Heart left ventricle (tissue), 16 donors: ENCODE measurements at regions of chr2 and their contacts with region 1.

Region 1: GRCh38 chr2:181586569-181587081 is 70.3 kb downstream of the CERKL start:
- DNase-seq: no peak
- ATAC-seq: no peak
- H3K4me3 ChIP-seq: no peak overlapping the region
- H3K27ac ChIP-seq: no peak overlapping the region
- H3K4me1 ChIP-seq: no peaks in the 10 kb centered on the region
- H3K27me3 ChIP-seq: peaks cover 0 to 40% (median 0%) of the 10 kb centered on the region in 9 donors
- CTCF ChIP-seq: no peak
- POLR2A ChIP-seq: no peak

Region 2: DNA sequence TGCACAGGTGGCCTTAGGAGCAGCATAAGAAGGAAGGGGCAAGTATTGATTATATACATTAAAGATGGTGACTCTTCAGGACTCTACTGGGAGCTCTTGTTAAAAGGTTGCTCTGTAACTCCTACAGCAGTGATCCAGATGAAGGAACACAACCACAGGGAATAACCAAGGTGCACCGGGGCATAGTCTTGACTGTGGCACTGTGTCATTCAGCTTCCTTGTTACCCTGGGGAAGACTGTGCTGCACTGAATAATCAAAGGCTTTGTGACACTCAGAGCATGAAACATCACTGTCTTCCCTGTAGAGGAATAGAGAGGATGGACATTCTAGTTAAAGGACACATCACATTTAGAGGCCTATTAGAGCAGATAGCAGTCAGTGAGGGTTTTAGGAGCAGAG is 500.9 kb before region 1 on chr2:
- intact Hi-C with region 1: no loop called
- DNase-seq: no peak
- ATAC-seq: no peak
- H3K4me3 ChIP-seq: no peak overlapping the region
- H3K27ac ChIP-seq: no peak overlapping the region
- H3K4me1 ChIP-seq: no peaks in the 10 kb centered on the region
- H3K27me3 ChIP-seq: peaks cover 0 to 9% (median 0%) of the 10 kb centered on the region in 9 donors
- CTCF ChIP-seq: no peak
- POLR2A ChIP-seq: no peak

Region 3: DNA sequence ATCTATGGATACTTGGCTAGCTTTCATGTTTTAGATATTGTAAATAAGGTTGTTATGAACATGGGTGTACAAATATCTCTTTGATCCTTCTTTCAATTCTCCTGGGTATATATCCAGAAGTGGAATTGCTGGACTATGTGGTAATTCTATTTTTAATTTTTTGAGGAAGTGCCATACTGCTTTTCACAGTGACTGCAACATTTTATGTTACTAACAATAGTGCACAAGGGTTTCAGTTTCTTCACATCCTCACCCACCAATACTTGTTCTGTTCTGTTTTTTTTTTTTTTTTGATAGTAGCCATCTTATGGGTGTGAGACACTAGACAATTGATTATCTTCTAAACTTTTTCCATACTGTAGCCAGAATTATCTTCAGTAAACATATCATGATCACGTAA is 110.9 kb after region 1 on chr2:
- intact Hi-C with region 1: loop called in 1 of 10 experiments (anchors 10 kb)
- DNase-seq: no peak
- ATAC-seq: no peak
- H3K4me3 ChIP-seq: no peak overlapping the region
- H3K27ac ChIP-seq: peak overlapping the region in 1 of 12 donors; percentile 3
- H3K4me1 ChIP-seq: peaks cover 0 to 5% (median 0%) of the 10 kb centered on the region in 12 donors
- H3K27me3 ChIP-seq: peaks cover 0 to 10% (median 0%) of the 10 kb centered on the region in 9 donors
- CTCF ChIP-seq: no peak
- POLR2A ChIP-seq: no peak